ENCODE measurements at regions of chr21 and their contacts with region 1.

Region 1: GRCh38 chr21:14864211-14865021 is 200.4 kb downstream of the NRIP1 start:
- DNase-seq: peak; percentile 16
- H3K4me3 Mint-ChIP-seq: no peak overlapping the region
- H3K27ac Mint-ChIP-seq: no peak overlapping the region
- H3K4me1 Mint-ChIP-seq: peaks cover 5% of the 10 kb centered on the region
- H3K27me3 Mint-ChIP-seq: no peaks in the 10 kb centered on the region

Region 2: DNA sequence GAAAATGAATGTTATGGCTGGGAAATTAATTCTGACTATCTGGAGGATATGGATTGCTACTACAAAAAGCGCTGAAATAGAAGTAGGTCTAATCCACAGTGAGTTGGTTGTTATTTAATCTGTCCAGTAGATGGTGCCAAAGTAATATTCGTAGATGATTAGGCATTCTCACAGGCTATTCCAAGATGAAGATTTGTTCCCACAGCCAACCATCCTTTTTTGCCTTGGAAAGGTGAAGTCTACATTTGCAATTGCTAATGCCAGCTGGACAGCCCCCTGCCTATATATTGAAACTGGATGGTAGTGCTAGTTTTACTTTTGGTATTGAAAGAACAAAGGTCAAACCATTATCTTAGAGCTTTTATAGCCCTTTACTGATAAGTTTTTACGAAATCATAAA is 604.7 kb before region 1 on chr21:
- intact Hi-C with region 1: loop called (anchors 2 kb)
- DNase-seq: no peak
- H3K4me3 Mint-ChIP-seq: no peak overlapping the region
- H3K27ac Mint-ChIP-seq: no peak overlapping the region
- H3K4me1 Mint-ChIP-seq: no peaks in the 10 kb centered on the region
- H3K27me3 Mint-ChIP-seq: peaks cover 10% of the 10 kb centered on the region

Region 3: DNA sequence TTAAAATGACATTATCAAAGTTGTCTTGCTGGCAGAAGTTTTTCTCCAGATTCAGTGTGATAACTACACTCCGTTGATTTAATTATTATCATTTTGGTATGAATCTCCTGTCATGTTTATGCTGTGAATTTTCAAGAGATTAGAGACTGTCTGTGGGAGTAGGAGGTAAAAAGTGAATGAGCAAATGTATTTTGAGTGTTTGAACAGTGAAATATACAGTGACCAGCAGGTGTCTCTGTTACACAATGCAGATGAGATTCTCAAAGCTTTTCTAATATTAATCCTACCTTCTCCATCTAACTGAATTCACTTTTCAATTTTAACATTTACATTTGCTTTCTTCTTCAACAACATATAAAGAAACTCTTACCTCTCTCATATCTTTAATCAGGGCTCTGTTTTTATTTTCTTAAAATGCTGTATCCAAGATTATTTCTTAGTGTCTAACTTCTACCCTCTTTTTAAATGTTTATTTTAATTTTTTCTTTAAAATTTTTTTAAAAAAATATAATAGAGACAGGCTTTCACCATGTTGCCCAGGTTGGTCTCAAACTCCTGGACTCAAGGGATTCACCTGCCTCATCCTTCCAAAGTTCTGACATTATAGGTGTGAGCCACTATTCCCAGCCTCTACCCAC is 460.6 kb before region 1 on chr21:
- intact Hi-C with region 1: loop called (anchors 1 kb)
- DNase-seq: no peak
- H3K4me3 Mint-ChIP-seq: no peak overlapping the region
- H3K27ac Mint-ChIP-seq: no peak overlapping the region
- H3K4me1 Mint-ChIP-seq: peaks cover 5% of the 10 kb centered on the region
- H3K27me3 Mint-ChIP-seq: no peaks in the 10 kb centered on the region

Region 4: GRCh38 chr21:14706712-14707510 is 157.5 kb before region 1 on chr21:
- intact Hi-C with region 1: no loop called
- DNase-seq: no peak
- H3K4me3 Mint-ChIP-seq: no peak overlapping the region
- H3K27ac Mint-ChIP-seq: no peak overlapping the region
- H3K4me1 Mint-ChIP-seq: peaks cover 12% of the 10 kb centered on the region
- H3K27me3 Mint-ChIP-seq: no peaks in the 10 kb centered on the region